Psoas muscle (tissue), 8 donors: ENCODE measurements at regions of chr15 and their contacts with region 1.

Region 1: DNA sequence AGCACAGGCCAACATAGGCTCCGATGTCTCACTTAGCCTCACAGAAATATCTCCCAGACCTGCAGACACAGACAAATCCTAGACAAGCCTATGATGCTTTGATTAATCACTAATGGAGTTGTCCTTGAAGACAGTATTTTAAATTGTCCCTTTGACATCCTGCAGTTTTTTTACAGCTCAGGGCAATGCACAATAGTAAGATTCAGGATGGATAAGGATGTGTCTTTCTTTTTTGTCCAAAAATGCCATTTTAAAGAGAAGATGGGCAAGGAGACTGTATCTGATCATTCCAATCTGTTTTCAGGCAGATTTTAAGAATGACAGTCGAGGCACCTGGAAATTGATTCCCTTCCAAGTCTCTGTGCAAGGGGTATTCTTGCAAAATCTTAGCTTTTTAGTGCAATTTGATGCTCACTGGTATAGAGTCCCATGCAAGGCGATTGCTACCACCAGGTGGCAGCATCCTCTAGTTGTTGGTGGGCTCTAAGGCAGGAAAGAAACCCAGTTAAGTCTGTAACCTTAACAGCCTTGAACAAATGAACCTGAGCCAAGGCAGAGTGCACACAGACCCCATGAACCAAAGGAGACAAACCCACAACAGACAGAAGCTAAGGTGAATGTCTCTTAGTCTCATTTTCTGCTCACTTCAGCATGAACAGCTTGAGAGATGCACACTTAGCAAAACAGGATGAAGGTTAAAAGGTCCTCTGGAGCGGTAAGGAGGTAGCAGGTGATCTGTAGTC is 51.2 kb upstream of the MINAR1 start:
- DNase-seq: peak; percentile 69 to 81
- ATAC-seq: peak; percentile 69 to 86 (median 76)
- H3K4me3 ChIP-seq: no peak overlapping the region
- H3K27ac ChIP-seq: no peak overlapping the region
- H3K4me1 ChIP-seq: no peaks in the 10 kb centered on the region
- H3K27me3 ChIP-seq: no peaks in the 10 kb centered on the region
- CTCF ChIP-seq: peak; percentile 93

Region 2: DNA sequence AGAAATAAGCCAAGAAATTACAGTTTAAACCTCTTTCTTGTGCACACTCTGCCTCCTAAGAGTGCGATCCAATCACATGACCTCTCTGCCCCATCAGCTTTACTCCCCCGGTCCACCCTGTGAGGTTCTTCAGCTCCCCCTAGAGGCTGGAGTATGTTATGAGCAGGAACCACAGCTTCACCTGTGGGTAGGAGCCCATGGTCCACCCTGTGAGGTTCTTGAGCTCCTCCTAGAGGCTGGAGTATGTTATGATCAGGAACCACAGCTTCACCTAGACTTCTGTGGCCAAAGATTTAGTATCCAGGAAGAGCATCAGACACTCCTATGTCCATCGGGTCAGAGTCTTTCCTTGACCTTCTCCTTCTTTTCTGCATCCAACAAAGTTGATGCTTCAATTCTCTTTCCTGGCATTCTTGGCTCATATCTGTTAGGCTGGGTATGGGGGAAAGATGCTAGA is 215.2 kb after region 1 on chr15:
- intact Hi-C with region 1: loop called (anchors 1 to 2 kb)
- DNase-seq: no peak
- ATAC-seq: peak; percentile 75 to 91 (median 82)
- H3K4me3 ChIP-seq: no peak overlapping the region
- H3K27ac ChIP-seq: no peak overlapping the region
- H3K4me1 ChIP-seq: no peaks in the 10 kb centered on the region
- H3K27me3 ChIP-seq: peaks cover 0 to 2% (median 0%) of the 10 kb centered on the region in 3 donors
- CTCF ChIP-seq: peak; percentile 70

Region 3: GRCh38 chr15:79853458-79854328 is 472.8 kb after region 1 on chr15:
- intact Hi-C with region 1: loop called (anchors 2 to 5 kb)
- DNase-seq: peak; percentile 40 to 52
- ATAC-seq: peak; percentile 88 to 98 (median 94)
- H3K4me3 ChIP-seq: no peak overlapping the region
- H3K27ac ChIP-seq: no peak overlapping the region
- H3K4me1 ChIP-seq: no peaks in the 10 kb centered on the region
- H3K27me3 ChIP-seq: no peaks in the 10 kb centered on the region
- CTCF ChIP-seq: peak; percentile 91

Region 4: DNA sequence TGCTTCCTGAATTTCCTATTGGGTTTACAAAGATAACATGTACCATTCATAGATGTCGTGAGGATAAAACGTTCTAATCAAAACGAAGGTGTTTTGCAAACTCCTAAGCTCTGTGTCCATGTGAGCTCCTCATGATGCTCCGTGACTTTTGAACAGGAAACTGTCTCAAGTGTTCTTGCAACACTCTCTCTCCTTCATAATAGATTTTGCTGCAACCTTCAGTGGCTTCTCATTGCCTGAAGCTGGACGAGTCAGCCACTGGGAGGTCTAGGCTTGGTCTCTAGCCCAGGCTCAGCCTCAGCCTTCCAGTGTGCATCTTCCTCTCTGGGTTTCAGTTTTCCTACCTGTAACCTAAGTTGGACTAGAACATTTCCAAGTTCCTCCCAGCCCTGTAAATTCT is 608.8 kb after region 1 on chr15:
- intact Hi-C with region 1: loop called (anchors 2 to 5 kb)
- DNase-seq: no peak
- ATAC-seq: no peak
- H3K4me3 ChIP-seq: no peak overlapping the region
- H3K27ac ChIP-seq: no peak overlapping the region
- H3K4me1 ChIP-seq: no peaks in the 10 kb centered on the region
- H3K27me3 ChIP-seq: no peaks in the 10 kb centered on the region
- CTCF ChIP-seq: no peak

Region 5: GRCh38 chr15:80173022-80173759 is 792.3 kb after region 1 on chr15:
- intact Hi-C with region 1: loop called in 1 of 2 experiments (anchors 10 kb)
- DNase-seq: peak; percentile 44 to 78
- ATAC-seq: peak; percentile 29 to 77 (median 70)
- H3K4me3 ChIP-seq: no peak overlapping the region
- H3K27ac ChIP-seq: peak overlapping the region; percentile 84
- H3K4me1 ChIP-seq: peaks cover 23% of the 10 kb centered on the region
- H3K27me3 ChIP-seq: no peaks in the 10 kb centered on the region
- CTCF ChIP-seq: peak; percentile 71